HAP-1 (cell line): ENCODE measurements at regions of chr5 and their contacts with region 1.

Region 1: DNA sequence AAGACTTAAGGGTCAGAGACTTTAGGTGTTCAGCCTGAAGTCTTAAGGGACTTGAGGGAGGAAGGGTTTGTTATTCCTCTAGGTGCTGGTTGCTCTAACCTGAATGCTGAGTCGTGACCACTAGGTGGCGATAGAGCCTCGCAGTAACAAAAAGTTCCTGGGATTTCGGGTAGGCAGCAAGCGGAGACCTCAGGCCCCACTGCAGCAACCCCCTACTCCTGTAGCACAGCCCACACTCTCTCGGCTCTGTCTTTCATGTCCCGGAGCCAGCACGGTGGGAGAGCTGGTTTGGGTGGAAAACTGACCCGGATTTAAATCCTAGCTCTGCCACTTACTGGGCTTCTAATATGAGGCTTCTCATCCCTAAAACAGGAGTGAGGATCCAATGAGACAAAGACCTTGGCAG is 100.3 kb upstream of the PANK3 start:
- DNase-seq: peak; percentile 85 to 90
- H3K4me3 ChIP-seq: no peak overlapping the region
- H3K4me1 ChIP-seq: peaks cover 8% of the 10 kb centered on the region
- H3K27me3 ChIP-seq: no peaks in the 10 kb centered on the region

Region 2: GRCh38 chr5:168268949-168269943 is 410.3 kb before region 1 on chr5:
- in situ Hi-C with region 1: loop called (anchors 25 kb)
- DNase-seq: peak; percentile 83 to 95
- H3K4me3 ChIP-seq: peak overlapping the region; percentile 22
- H3K4me1 ChIP-seq: peaks cover 8% of the 10 kb centered on the region
- H3K27me3 ChIP-seq: no peaks in the 10 kb centered on the region

Region 3: GRCh38 chr5:169296419-169297143 is 617.1 kb after region 1 on chr5:
- in situ Hi-C with region 1: loop called (anchors 25 kb)
- DNase-seq: no peak
- H3K4me3 ChIP-seq: no peak overlapping the region
- H3K4me1 ChIP-seq: no peaks in the 10 kb centered on the region
- H3K27me3 ChIP-seq: 0 out of 2 replicates have a peak, but pooled peaks cover 3% of the 10 kb centered on the region

Region 4: DNA sequence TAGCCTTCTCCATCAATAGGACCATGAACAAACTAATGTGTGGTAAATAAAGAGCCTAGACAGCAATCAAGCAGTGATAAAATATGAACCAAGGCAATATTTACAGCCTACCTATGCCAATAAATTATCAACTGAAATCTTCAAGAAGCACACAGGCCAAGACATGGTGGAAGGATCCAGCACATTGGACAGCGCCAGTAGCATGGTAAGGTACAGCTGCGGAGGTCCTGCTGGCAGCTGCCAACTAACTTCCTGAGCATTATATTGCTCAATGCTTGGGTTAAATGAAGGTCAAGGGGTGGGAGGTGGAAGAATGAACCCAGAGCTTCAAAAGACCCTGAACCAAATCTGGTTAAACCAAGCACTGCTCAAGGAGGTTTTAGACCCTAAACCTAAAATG is 887.6 kb after region 1 on chr5:
- in situ Hi-C with region 1: loop called (anchors 25 kb)
- DNase-seq: peak in 1 of 2 experiments; percentile 17
- H3K4me3 ChIP-seq: no peak overlapping the region
- H3K4me1 ChIP-seq: no peaks in the 10 kb centered on the region; the same call in 1 of the 2 replicates
- H3K27me3 ChIP-seq: peaks cover 9% of the 10 kb centered on the region; the same call in 1 of the 2 replicates